GM12878 (cell line): ENCODE measurements at regions of chr22 and their contacts with region 1.

Region 1: DNA sequence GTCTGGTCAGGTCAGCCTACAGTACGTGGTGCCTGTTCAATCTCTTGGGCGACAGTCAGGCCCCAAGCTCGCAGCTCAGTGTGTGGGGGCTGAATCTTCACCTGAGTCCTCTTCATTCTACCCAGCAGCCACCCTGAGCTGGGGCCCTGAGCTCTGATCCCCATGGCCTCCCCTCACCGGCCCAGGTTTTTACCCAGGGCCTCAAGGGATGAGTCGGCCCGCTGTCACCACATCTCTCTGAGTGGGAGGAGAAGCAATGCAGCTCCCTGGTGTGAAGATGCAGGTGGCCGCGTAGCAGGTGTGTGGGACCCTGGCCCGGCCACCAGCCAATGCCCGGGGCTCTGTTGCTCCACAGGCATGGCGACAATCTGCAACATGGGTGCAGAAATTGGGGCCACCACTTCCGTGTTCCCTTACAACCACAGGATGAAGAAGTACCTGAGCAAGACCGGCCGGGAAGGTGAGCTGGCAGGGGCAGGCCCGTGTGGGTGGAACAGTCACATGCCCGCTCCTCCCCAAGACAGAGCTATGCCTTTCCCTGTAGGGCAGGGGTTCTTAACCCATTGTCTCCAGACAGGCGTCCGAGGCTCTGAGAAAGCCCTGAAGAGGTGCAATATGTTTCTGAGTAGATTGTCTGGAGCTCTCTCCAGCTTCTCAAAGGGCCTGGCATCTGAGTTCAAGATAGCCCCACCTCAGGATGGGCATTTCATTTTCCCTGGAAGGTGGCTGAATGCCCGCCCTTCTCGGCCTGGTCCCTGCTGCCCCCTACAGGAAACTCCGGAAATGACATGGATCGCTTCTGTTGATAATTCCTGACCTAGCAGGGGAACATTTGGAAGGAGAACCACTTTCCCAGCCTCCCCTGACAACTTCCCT is 26.9 kb downstream of the POLR3H start:
- DNase-seq: no peak
- ATAC-seq: peak; percentile 51
- H3K4me3 ChIP-seq: no peak overlapping the region
- H3K27ac ChIP-seq: no peak overlapping the region
- H3K4me1 ChIP-seq: no peaks in the 10 kb centered on the region
- H3K27me3 ChIP-seq: no peaks in the 10 kb centered on the region
- CTCF ChIP-seq: peak; percentile 72 to 81 (median 81)
- EP300 ChIP-seq: no peak
- POLR2A ChIP-seq: no peak
- RAD21 ChIP-seq: peak; percentile 86

Region 2: GRCh38 chr22:41411021-41411851 is 106.2 kb before region 1 on chr22:
- CTCF ChIA-PET with region 1: interaction called, 105 read pairs
- POLR2A ChIA-PET with region 1: no interaction called
- RAD21 ChIA-PET with region 1: interaction called, 4 read pairs
- SMC1A ChIA-PET with region 1: no interaction called
- in situ Hi-C with region 1: no loop called
- intact Hi-C with region 1: no loop called
- DNase-seq: no peak
- ATAC-seq: no peak
- H3K4me3 ChIP-seq: no peak overlapping the region
- H3K27ac ChIP-seq: no peak overlapping the region
- H3K4me1 ChIP-seq: peaks cover 22% of the 10 kb centered on the region
- H3K27me3 ChIP-seq: no peaks in the 10 kb centered on the region
- CTCF ChIP-seq: no peak
- EP300 ChIP-seq: no peak
- POLR2A ChIP-seq: no peak
- RAD21 ChIP-seq: no peak

Region 3: DNA sequence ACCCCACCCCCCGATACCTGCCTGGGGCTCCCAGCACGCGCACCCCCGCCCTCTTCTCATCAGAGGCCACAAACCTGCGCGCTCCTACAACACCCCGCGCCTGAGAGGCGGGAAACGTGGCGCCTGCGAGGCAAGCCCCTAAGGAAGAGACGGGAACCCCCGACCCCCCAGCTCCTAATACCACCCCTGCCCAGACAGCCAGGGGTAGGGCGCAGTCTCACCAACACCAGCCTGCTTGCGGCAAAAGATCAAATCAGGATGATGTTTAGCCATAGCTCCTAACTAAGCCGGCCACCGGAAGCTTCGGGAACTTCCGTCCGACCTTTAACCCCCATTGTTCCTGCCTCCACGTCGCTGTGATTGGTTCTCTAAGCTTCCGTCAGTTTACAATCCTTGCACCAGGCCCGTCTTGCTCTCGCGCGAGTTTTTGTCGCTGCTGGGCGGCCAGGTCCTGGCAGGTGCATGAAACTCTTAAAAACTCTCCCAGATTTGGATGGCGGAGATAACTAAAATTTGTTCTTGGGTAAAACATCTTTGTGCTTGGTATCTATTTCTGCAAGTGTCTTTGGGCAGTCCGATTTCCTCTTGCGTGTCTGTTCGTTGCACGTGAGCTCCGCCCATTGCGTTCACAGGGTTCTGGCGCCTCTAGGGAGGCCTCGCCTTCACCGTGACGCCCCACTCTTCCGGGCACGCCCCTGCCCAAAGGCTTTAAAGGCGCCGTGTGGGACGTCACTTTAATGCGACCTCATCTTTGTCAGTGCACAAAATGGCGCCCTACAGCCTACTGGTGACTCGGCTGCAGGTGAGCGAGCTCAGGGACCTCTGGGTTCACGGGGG is 48.8 kb before region 1 on chr22 and contains the starts of genes ACO2 and PHF5A:
- CTCF ChIA-PET with region 1: interaction called, 15 read pairs
- POLR2A ChIA-PET with region 1: no interaction called
- RAD21 ChIA-PET with region 1: interaction called, 6 read pairs
- SMC1A ChIA-PET with region 1: interaction called, 3 read pairs
- in situ Hi-C with region 1: no loop called
- intact Hi-C with region 1: no loop called
- DNase-seq: peak; percentile 98
- ATAC-seq: peak; percentile 95
- H3K4me3 ChIP-seq: peak within 1 kb of the TSS; percentile 80
- H3K27ac ChIP-seq: peak within 1 kb of the TSS; percentile 97
- H3K4me1 ChIP-seq: peaks cover 14% of the 10 kb centered on the region
- H3K27me3 ChIP-seq: no peaks in the 10 kb centered on the region
- CTCF ChIP-seq: no peak
- EP300 ChIP-seq: peak in 1 of 2 experiments; percentile 32; a peak in 1 of 4 replicates
- POLR2A ChIP-seq: peak; percentile 81
- RAD21 ChIP-seq: no peak
- polyA plus RNA-seq, gene ACO2: 21.4 to 22.3 TPM
- polyA plus RNA-seq, gene PHF5A: 40.5 to 77.0 TPM

Region 4: GRCh38 chr22:41479671-41480396 is 37.6 kb before region 1 on chr22:
- CTCF ChIA-PET with region 1: interaction called, 8 read pairs
- POLR2A ChIA-PET with region 1: interaction called, 6 read pairs
- RAD21 ChIA-PET with region 1: interaction called, 7 read pairs
- SMC1A ChIA-PET with region 1: interaction called, 14 read pairs
- in situ Hi-C with region 1: no loop called
- intact Hi-C with region 1: no loop called
- DNase-seq: no peak
- ATAC-seq: no peak; the same call in 2 of the 3 replicates
- H3K4me3 ChIP-seq: no peak overlapping the region
- H3K27ac ChIP-seq: peak overlapping the region; percentile 52
- H3K4me1 ChIP-seq: peaks cover 60% of the 10 kb centered on the region
- H3K27me3 ChIP-seq: no peaks in the 10 kb centered on the region
- CTCF ChIP-seq: no peak
- EP300 ChIP-seq: no peak
- POLR2A ChIP-seq: no peak
- RAD21 ChIP-seq: no peak

Region 5: DNA sequence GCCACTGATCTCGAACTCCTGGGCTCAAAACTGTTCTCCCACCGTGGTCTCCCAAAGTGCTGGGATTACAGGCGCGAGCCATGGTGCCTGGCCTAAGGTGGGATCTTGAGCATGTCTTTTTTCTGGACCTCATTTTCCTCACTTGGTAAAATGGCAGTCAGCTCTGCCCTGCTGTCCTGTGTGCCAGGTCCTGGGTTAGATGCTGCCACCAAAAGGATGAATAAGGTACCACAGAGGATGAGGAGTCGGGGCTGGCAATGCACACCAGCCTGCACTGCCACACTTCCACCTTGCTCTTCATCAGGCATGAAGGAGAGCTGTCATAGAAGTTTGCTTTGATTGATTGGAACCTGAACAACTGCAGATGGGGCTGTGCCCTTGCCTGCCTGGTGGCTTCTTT is 16.2 kb before region 1 on chr22:
- CTCF ChIA-PET with region 1: interaction called, 13 read pairs
- POLR2A ChIA-PET with region 1: no interaction called
- RAD21 ChIA-PET with region 1: no interaction called
- SMC1A ChIA-PET with region 1: interaction called, 6 read pairs
- in situ Hi-C with region 1: no loop called
- intact Hi-C with region 1: no loop called
- DNase-seq: peak; percentile 27
- ATAC-seq: peak; percentile 93
- H3K4me3 ChIP-seq: no peak overlapping the region
- H3K27ac ChIP-seq: no peak overlapping the region
- H3K4me1 ChIP-seq: no peaks in the 10 kb centered on the region
- H3K27me3 ChIP-seq: no peaks in the 10 kb centered on the region
- CTCF ChIP-seq: peak; percentile 46 to 71 (median 52); a peak in 5 of 6 replicates
- EP300 ChIP-seq: no peak
- POLR2A ChIP-seq: no peak
- RAD21 ChIP-seq: peak; percentile 67

Region 6: DNA sequence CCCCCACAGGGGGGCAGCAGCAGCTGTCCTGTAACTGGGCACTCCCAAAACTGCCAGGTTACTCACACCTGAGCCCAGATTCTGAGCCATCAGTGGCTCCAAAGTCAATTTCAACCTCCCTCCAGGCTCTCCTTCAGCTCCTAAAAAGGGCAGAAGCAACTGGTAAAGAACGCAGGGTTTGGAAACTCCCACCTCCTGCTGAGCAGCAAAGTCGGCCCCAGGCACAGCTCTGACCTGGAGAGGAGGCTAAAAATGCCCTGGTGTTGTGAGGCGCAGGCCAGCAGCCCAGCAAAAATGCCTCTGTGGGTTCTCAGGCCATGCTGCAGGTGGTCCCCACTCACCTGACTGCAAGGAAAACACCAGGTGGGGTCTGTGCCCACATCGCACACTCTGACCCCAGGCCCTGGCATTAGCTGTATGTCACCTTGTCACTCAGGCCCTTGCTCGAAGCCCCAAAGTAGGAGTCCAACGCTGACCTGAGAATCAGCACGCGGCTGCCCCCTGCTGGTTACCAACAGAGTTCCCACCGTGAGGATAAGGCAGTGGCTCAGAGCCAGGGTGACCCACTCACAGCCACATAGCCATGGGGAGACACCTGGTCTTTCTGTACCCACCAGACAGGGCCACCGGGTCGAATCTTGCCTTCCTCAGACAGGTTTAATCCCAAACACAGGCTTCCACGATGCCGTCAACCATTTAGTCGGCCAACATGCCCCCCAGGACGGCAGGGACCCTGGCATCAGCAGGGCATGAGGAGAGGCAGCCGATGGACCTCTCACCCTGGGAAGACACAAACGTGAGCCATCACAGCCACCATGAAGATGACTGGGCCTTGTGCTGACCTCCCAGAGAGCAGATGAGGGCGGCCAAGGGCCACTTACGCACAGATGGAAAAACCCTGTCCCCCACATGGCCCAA is 15.8 kb after region 1 on chr22:
- CTCF ChIA-PET with region 1: interaction called, 23 read pairs
- POLR2A ChIA-PET with region 1: no interaction called
- RAD21 ChIA-PET with region 1: no interaction called
- SMC1A ChIA-PET with region 1: no interaction called
- in situ Hi-C with region 1: no loop called
- intact Hi-C with region 1: no loop called
- DNase-seq: no peak
- ATAC-seq: peak; percentile 94
- H3K4me3 ChIP-seq: no peak overlapping the region
- H3K27ac ChIP-seq: no peak overlapping the region
- H3K4me1 ChIP-seq: no peaks in the 10 kb centered on the region
- H3K27me3 ChIP-seq: no peaks in the 10 kb centered on the region
- CTCF ChIP-seq: peak; percentile 82 to 84 (median 82)
- EP300 ChIP-seq: no peak
- POLR2A ChIP-seq: peak; percentile 36
- RAD21 ChIP-seq: peak; percentile 59